ENCODE measurements at regions of chr20 and their contacts with region 1.

Region 1: DNA sequence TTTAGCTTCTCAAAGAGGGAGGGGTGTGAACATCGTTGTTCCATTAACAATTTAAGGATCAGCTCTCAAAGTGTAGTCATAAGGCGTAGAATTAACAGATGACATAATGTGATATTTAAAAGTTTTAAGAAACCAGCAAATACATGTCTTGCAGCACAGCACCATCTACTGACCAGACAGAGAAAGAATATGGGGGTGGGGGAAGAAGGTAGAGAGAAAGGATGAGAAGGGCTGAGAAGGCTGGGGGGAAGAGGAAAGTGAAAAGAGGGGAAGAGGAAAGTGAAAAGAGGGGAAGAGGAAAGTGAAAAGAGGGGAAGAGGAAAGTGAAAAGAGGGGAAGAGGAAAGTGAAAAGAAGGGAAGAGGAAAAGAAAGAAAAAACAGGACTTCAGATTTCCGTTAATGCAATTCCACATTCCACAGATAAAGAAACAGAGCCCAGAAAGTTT is 80.9 kb downstream of the HAO1 start:
- DNase-seq: no peak
- ATAC-seq: peak; percentile 65 to 80 (median 74)
- H3K4me3 ChIP-seq: no peak overlapping the region
- H3K27ac ChIP-seq: no peak overlapping the region
- H3K4me1 ChIP-seq: no peaks in the 10 kb centered on the region
- H3K27me3 ChIP-seq: no peaks in the 10 kb centered on the region
- CTCF ChIP-seq: peak; percentile 39

Region 2: DNA sequence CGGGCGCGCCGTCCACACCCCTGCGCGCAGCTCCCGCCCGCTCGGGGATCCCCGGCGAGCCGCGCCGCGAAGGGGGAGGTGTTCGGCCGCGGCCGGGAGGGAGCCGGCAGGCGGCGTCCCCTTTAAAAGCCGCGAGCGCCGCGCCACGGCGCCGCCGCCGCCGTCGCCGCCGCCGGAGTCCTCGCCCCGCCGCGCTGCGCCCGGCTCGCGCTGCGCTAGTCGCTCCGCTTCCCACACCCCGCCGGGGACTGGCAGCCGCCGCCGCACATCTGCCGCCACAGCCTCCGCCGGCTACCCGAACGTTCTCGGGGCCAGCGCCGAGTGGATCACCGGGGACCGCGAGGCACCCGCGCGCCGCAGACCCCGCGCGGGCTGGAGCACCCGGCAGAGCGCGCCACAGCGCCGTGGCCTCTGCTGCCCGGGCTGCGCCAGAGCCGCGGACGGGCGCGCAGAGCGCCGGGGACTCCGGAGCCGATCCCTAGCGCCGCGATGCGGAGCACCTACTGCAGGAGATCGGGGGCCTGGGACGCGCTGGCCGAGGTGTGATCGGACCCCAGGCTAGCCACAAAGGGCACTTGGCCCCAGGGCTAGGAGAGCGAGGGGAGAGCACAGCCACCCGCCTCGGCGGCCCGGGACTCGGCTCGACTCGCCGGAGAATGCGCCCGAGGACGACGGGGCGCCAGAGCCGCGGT is 1091.7 kb before region 1 on chr20 and contains the start of gene BMP2:
- intact Hi-C with region 1: loop called in 1 of 2 experiments (anchors 5 kb)
- DNase-seq: peak; percentile 60 to 74
- ATAC-seq: peak; percentile 72 to 80 (median 76)
- H3K4me3 ChIP-seq: peak within 1 kb of the TSS; percentile 77
- H3K27ac ChIP-seq: peak within 1 kb of the TSS; percentile 48
- H3K4me1 ChIP-seq: no peaks in the 10 kb centered on the region
- H3K27me3 ChIP-seq: peaks cover 0 to 14% (median 3%) of the 10 kb centered on the region in 3 donors
- CTCF ChIP-seq: no peak
- total RNA-seq, gene BMP2: 0.75 to 2.9 (median 1.6) TPM

Region 3: DNA sequence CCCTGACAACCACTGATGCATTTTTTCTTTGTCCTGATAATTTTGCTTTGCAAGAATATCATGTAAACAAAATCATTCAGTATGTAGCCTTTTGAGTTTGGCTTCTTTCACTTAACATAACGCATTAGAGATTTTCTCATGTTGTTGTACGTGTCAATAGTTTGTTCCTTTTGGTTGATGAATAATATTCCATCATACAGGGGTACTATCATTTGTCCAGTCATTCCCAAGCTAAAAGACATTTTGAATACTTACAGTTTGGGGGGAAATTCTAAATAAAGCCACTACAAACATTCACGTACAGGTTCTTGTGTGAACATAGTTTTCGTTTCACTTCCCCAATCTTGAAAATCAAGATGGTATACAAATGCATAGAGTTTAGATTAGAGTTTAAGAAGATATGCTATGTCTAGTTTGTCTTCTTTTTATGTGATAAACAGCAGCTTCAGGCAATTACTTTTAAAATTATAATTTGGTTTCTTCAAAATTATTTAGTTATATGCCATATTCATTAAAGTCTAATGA is 75.7 kb after region 1 on chr20:
- intact Hi-C with region 1: no loop called
- DNase-seq: no peak
- ATAC-seq: no peak
- H3K4me3 ChIP-seq: no peak overlapping the region
- H3K27ac ChIP-seq: no peak overlapping the region
- H3K4me1 ChIP-seq: no peaks in the 10 kb centered on the region
- H3K27me3 ChIP-seq: no peaks in the 10 kb centered on the region
- CTCF ChIP-seq: no peak